ENCODE measurements at regions of chr3 and their contacts with region 1.

Region 1: GRCh38 chr3:16247276-16248061 is 17.3 kb downstream of the DPH3 start:
- DNase-seq: peak; percentile 89
- H3K4me3 Mint-ChIP-seq: no peak overlapping the region
- H3K27ac Mint-ChIP-seq: no peak overlapping the region
- H3K4me1 Mint-ChIP-seq: peaks cover 4% of the 10 kb centered on the region
- H3K27me3 Mint-ChIP-seq: no peaks in the 10 kb centered on the region

Region 2: GRCh38 chr3:15899388-15899787 is 348.1 kb before region 1 on chr3:
- CTCF ChIA-PET with region 1: no interaction called
- intact Hi-C with region 1: no loop called
- DNase-seq: no peak
- H3K4me3 Mint-ChIP-seq: no peak overlapping the region
- H3K27ac Mint-ChIP-seq: no peak overlapping the region
- H3K4me1 Mint-ChIP-seq: peaks cover 2% of the 10 kb centered on the region
- H3K27me3 Mint-ChIP-seq: no peaks in the 10 kb centered on the region

Region 3: GRCh38 chr3:16048435-16049318 is 198.8 kb before region 1 on chr3:
- CTCF ChIA-PET with region 1: interaction called, 14 read pairs
- intact Hi-C with region 1: loop called (anchors 1 kb)
- DNase-seq: peak; percentile 68
- H3K4me3 Mint-ChIP-seq: no peak overlapping the region
- H3K27ac Mint-ChIP-seq: no peak overlapping the region
- H3K4me1 Mint-ChIP-seq: peaks cover 10% of the 10 kb centered on the region
- H3K27me3 Mint-ChIP-seq: no peaks in the 10 kb centered on the region

Region 4: GRCh38 chr3:16177962-16178627 is 69.4 kb before region 1 on chr3:
- CTCF ChIA-PET with region 1: interaction called, 5 read pairs
- intact Hi-C with region 1: loop called (anchors 1 kb)
- DNase-seq: peak; percentile 73
- H3K4me3 Mint-ChIP-seq: no peak overlapping the region
- H3K27ac Mint-ChIP-seq: no peak overlapping the region
- H3K4me1 Mint-ChIP-seq: peaks cover 2% of the 10 kb centered on the region
- H3K27me3 Mint-ChIP-seq: peaks cover 7% of the 10 kb centered on the region

Region 5: GRCh38 chr3:16211176-16211904 is 36.1 kb before region 1 on chr3:
- CTCF ChIA-PET with region 1: no interaction called
- intact Hi-C with region 1: loop called (anchors 1 kb)
- DNase-seq: no peak
- H3K4me3 Mint-ChIP-seq: no peak overlapping the region
- H3K27ac Mint-ChIP-seq: no peak overlapping the region
- H3K4me1 Mint-ChIP-seq: no peaks in the 10 kb centered on the region
- H3K27me3 Mint-ChIP-seq: no peaks in the 10 kb centered on the region

Region 6: GRCh38 chr3:16467393-16467792 is 219.9 kb after region 1 on chr3:
- CTCF ChIA-PET with region 1: no interaction called
- intact Hi-C with region 1: no loop called
- DNase-seq: peak; percentile 84
- H3K4me3 Mint-ChIP-seq: peak overlapping the region; percentile 50
- H3K27ac Mint-ChIP-seq: peak overlapping the region; percentile 79
- H3K4me1 Mint-ChIP-seq: peaks cover 66% of the 10 kb centered on the region
- H3K27me3 Mint-ChIP-seq: no peaks in the 10 kb centered on the region

Measured in activated naive CD4-positive, alpha-beta T cell treated with anti-CD3 and anti-CD28 coated beads for 36 hours (primary cell).